Heart left ventricle (tissue), 16 donors: ENCODE measurements at regions of chr4 and their contacts with region 1.

Region 1: GRCh38 chr4:185640811-185641675 is 105.7 kb upstream of the PDLIM3 start:
- DNase-seq: no peak
- ATAC-seq: no peak
- H3K4me3 ChIP-seq: no peak overlapping the region
- H3K27ac ChIP-seq: peak overlapping the region in 2 of 12 donors; percentile 17 to 63
- H3K4me1 ChIP-seq: peaks cover 0 to 14% (median 1%) of the 10 kb centered on the region in 12 donors
- H3K27me3 ChIP-seq: peaks cover 0 to 5% (median 0%) of the 10 kb centered on the region in 9 donors
- CTCF ChIP-seq: peak in 11 of 12 donors; percentile 31 to 69 (median 52)
- POLR2A ChIP-seq: no peak

Region 2: DNA sequence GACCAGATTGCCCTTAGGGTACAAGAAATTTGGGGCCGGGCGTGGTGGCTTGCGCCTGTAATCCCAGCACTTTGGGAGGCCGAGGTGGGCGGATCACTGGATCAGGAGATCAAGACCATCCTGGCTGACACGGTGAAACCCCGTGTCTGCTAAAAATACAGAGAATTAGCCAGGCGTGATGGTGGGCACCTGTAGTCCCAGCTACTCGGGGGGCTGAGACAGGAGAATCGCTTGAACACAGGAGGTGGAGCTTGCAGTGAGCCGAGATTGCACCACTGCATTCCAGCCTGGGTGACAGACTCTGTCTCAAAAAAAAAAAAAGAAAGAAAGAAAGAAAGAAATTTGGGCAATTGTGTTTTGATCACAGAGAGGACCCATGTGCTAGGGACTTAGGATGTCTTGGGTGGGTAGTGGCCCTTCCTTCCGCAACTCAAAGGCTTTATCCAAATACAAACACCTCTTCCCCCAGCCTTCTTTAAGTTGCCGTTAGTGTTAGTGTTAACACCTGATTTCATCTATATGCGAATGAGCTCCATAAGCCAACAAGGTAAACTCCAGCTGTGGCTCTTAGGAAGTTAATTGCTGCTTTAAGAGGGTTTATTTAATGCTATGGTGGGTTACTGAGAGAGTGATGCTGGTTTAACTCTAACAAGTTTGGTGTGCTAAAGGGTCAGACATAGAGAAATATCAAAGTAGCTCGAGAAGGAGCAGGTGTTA is 160.9 kb before region 1 on chr4:
- intact Hi-C with region 1: no loop called
- DNase-seq: no peak
- ATAC-seq: peak in 1 of 4 donors; percentile 25
- H3K4me3 ChIP-seq: no peak overlapping the region
- H3K27ac ChIP-seq: no peak overlapping the region
- H3K4me1 ChIP-seq: peaks cover 0 to 21% (median 0%) of the 10 kb centered on the region in 12 donors
- H3K27me3 ChIP-seq: peaks cover 0 to 8% (median 0%) of the 10 kb centered on the region in 9 donors
- CTCF ChIP-seq: no peak
- POLR2A ChIP-seq: no peak

Region 3: GRCh38 chr4:185774845-185775680 is 134.0 kb after region 1 on chr4:
- intact Hi-C with region 1: loop called in 1 of 10 experiments (anchors 5 kb)
- DNase-seq: peak in 1 of 5 donors; percentile 45
- ATAC-seq: peak; percentile 8 to 35 (median 24)
- H3K4me3 ChIP-seq: peak overlapping the region; percentile 3 to 56 (median 48)
- H3K27ac ChIP-seq: peak overlapping the region; percentile 71 to 95 (median 82)
- H3K4me1 ChIP-seq: peaks cover 0 to 74% (median 33%) of the 10 kb centered on the region in 12 donors
- H3K27me3 ChIP-seq: no peaks in the 10 kb centered on the region
- CTCF ChIP-seq: peak in 1 of 12 donors; percentile 5
- POLR2A ChIP-seq: no peak

Region 4: DNA sequence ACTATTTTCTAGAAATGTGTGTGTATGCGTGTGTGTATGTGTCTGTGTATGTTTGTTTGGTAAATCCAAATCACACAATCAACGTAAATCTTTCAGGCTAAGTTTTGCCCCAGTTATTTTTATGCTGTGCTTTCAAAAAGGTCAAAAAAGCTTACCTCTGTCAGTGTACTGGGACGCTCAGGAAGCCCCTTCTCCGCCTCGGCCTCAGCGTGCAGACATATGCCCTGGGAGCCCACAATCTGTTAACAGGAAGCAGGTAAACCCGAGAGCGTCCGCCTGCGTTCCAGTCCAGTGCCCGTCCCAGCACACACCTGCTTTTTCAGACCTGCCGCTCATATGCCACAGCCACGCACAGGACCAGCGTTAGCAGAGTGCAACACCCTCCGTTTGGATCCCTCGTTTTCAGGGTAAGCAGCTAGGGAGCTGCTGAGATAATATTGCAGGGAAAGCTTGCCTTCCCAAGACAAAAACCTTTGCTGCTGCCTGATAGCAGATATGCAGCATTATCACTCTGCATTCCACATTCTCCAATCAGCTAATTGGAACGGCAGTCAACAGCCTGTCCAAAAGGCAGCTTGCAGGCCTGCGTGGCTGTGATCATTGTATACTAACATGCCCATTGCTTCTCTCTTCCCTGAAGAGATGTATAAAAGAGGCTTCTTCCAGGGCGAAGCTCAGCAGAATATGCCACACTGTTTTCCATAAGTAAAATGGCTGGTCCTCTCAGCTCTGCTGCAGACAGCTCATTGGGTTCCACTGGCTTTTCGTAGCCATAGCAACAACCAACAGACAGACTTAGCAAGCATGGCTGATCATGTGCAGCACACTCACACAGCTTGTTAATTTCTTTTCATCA is 170.7 kb after region 1 on chr4 and contains the start of gene SORBS2:
- intact Hi-C with region 1: loop called in 1 of 10 experiments (anchors 10 kb)
- DNase-seq: peak in 2 of 5 donors; percentile 62
- ATAC-seq: peak; percentile 59 to 81 (median 79)
- H3K4me3 ChIP-seq: peak within 1 kb of the TSS; percentile 35 to 71 (median 59)
- H3K27ac ChIP-seq: peak within 1 kb of the TSS; percentile 72 to 95 (median 82)
- H3K4me1 ChIP-seq: peaks cover 0 to 3% (median 0%) of the 10 kb centered on the region in 12 donors
- H3K27me3 ChIP-seq: no peaks in the 10 kb centered on the region
- CTCF ChIP-seq: no peak
- POLR2A ChIP-seq: peak in 1 of 2 donors; percentile 60
- total RNA-seq, gene SORBS2: 966 to 2,158 (median 1,443) TPM

Region 5: DNA sequence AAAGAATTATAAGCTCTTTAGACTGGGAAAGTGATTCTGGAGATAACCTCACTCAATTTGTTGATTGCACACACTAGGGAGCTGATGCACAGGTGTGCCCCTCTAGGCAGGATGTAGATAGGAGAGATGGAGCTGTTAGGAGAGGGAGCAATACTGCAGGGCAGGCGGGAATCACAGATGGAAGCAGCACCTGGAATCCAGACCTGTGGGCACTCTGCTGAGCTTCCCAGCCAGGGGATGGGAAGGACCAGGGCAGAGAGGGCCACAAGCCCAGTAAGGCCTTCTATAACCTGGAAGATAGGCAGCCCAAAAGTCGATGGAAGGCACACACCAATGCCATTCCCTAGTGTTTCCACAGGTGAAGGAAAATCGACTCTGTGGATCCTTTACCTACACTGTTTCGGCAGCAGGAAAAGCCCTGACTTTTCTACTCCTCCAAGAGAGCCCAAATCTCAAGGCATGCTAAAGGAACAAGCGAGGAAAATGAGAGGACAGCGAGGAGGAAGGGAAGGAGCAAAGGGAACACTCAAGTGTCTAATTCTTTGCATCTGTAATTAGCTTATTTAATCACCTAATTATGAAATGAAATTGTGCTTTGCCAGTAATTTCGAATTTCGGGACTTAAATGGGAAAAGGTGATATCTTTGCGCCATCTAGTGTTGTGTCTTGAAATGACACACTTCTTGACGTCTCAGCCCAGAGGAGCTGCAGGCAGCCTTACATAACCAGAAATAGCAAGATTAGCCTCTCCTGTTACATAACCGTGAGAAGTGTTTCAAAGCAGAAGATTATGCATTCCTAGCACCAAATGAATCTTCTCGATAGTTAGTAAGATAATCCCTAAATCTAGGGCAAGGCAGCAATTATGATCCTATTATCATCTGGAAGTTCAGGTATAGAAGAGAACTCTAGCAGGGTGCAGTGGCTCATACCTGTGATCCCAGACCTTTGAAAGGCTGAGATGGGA is 396.9 kb after region 1 on chr4:
- intact Hi-C with region 1: loop called (anchors 2 to 5 kb)
- DNase-seq: peak in 2 of 5 donors; percentile 49 to 68
- ATAC-seq: peak; percentile 49 to 87 (median 79)
- H3K4me3 ChIP-seq: no peak overlapping the region
- H3K27ac ChIP-seq: peak overlapping the region in 1 of 12 donors; percentile 49
- H3K4me1 ChIP-seq: peaks cover 0 to 11% (median 6%) of the 10 kb centered on the region in 12 donors
- H3K27me3 ChIP-seq: no peaks in the 10 kb centered on the region
- CTCF ChIP-seq: peak; percentile 73 to 92 (median 83)
- POLR2A ChIP-seq: no peak